ENCODE measurements at regions of chr2 and their contacts with region 1.

Region 1: GRCh38 chr2:120312861-120313694 is 32.9 kb upstream of the INHBB start:
- DNase-seq: peak; percentile 85
- ATAC-seq: peak; percentile 78
- H3K4me3 Mint-ChIP-seq: peak overlapping the region; percentile 68
- H3K27ac Mint-ChIP-seq: peak overlapping the region; percentile 68
- H3K4me1 Mint-ChIP-seq: peaks cover 51% of the 10 kb centered on the region
- H3K27me3 Mint-ChIP-seq: no peaks in the 10 kb centered on the region

Region 2: GRCh38 chr2:120206022-120206581 is 107.0 kb before region 1 on chr2:
- CTCF ChIA-PET with region 1: interaction called, 17 read pairs
- POLR2A ChIA-PET with region 1: no interaction called
- DNase-seq: peak; percentile 59
- ATAC-seq: peak; percentile 40
- H3K4me3 Mint-ChIP-seq: no peak overlapping the region
- H3K27ac Mint-ChIP-seq: no peak overlapping the region
- H3K4me1 Mint-ChIP-seq: peaks cover 11% of the 10 kb centered on the region
- H3K27me3 Mint-ChIP-seq: no peaks in the 10 kb centered on the region

Region 3: DNA sequence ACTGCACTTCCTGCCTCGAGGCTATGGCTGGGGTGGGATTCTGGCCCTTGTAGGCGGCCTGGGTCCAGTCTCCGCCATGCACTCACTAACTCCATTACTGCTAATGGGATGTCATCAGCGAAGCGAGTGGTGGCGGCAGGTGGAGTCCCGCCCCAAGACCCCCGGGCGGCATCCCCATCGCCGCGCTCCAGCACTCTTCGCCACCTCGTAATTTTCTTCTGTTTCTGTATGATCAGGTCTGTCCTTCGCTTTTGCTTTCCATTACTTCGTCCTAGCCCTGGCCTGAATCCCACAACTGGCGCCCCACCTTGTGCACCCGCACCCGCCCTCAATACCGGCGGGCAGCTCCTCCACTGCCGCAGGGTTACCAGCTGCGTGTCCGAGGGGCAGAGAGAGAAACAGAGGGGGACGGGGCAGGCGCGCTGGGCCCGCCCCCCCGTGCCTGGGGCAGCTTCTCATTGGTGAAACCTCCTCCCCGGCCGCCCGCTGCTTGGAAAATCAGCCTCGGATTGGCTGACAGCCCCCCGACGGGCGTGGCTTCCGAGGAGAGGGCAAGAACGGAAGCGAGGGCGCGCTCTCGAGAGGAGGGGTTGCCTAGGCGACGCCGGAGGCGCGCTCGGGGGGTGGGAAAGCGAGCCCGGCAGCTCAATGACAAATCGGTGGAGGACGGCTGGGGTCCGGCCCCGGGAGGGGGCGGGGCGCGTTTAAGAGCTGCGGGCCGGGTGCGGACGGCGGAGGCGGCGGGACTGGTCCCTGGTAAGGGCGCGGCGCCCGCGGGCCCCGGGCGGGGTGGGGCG is 60.7 kb before region 1 on chr2 and contains the start of gene RALB:
- CTCF ChIA-PET with region 1: interaction called, 26 read pairs
- POLR2A ChIA-PET with region 1: interaction called, 4 read pairs
- DNase-seq: peak; percentile 100
- ATAC-seq: peak; percentile 97
- H3K4me3 Mint-ChIP-seq: peak within 1 kb of the TSS; percentile 99
- H3K27ac Mint-ChIP-seq: peak within 1 kb of the TSS; percentile 92
- H3K4me1 Mint-ChIP-seq: peaks cover 66% of the 10 kb centered on the region
- H3K27me3 Mint-ChIP-seq: peaks cover 23% of the 10 kb centered on the region
- total RNA-seq, gene RALB: 39.4 to 45.4 TPM

Region 4: DNA sequence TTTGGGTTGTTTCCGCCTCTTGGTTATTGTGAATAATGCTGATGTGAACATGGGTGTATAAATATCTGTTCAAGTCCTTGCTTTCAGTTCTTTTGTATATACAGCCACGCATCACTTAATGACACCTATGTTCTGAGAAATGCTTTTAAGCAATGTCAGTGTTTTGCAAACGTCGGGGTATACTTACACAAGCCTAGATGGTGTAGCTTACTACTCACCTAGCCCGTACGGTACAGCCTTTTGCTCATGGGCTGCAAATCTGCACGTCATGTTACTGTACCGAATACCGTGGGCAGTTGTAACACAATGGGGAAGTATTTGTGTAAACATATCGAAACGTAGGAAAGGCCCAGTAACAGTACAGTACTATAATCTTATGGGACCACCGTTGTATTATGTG is 48.1 kb before region 1 on chr2:
- CTCF ChIA-PET with region 1: interaction called, 11 read pairs
- POLR2A ChIA-PET with region 1: no interaction called
- DNase-seq: no peak
- ATAC-seq: no peak
- H3K4me3 Mint-ChIP-seq: no peak overlapping the region
- H3K27ac Mint-ChIP-seq: no peak overlapping the region
- H3K4me1 Mint-ChIP-seq: peaks cover 12% of the 10 kb centered on the region
- H3K27me3 Mint-ChIP-seq: no peaks in the 10 kb centered on the region

Region 5: GRCh38 chr2:120294008-120294340 is 19.1 kb before region 1 on chr2:
- CTCF ChIA-PET with region 1: interaction called, 38 read pairs
- POLR2A ChIA-PET with region 1: no interaction called
- DNase-seq: no peak
- ATAC-seq: no peak
- H3K4me3 Mint-ChIP-seq: no peak overlapping the region
- H3K27ac Mint-ChIP-seq: no peak overlapping the region
- H3K4me1 Mint-ChIP-seq: peaks cover 37% of the 10 kb centered on the region
- H3K27me3 Mint-ChIP-seq: no peaks in the 10 kb centered on the region

Region 6: DNA sequence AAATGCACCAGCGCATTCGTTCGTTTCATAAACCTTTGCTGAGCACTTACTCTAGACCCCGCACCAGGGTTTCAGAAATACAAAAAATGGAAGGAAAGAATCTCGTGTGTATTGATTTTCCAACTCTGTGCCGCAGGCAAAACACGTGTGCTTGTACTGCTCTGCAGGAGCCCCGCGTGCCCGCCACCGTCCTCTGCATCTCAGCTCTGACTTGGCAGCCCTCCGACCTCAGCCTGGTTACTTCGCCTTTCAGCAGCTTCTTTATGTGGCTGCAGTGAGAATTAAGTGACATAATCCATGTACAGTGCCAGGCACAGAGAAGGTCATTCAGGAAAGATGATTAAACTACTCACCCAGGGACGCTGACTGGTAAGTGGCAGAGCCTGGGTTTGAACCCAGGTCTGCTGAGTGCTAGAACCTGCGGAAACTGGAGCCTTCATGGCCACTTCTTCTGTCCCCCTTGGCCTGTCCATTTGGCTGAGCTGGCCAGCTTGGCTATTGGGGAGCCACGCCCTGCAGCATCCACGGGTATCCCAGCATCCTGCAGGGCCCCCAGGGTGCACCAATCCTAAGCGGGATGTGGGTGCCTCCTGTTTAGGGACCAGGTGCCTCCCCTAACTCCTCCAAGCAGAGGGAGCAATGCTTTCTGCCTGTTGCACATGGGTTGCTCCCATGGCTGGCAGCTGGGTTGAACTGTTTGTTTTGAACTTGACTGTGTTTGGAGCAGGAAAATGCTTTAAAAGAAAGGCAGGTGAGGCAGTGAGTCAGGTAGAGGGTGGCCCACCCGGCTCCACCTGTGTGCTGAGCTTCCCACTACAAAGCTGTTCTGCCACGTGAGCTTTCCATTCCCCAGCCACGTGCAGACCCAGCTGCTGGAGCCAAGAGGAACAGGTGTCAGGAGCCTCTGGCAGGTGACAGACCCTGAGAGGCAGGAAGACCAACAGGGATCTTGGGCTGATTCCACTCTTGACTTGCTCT is 67.1 kb after region 1 on chr2:
- CTCF ChIA-PET with region 1: no interaction called
- POLR2A ChIA-PET with region 1: no interaction called
- DNase-seq: no peak
- ATAC-seq: no peak
- H3K4me3 Mint-ChIP-seq: no peak overlapping the region
- H3K27ac Mint-ChIP-seq: no peak overlapping the region
- H3K4me1 Mint-ChIP-seq: no peaks in the 10 kb centered on the region
- H3K27me3 Mint-ChIP-seq: no peaks in the 10 kb centered on the region

Measured in activated CD8-positive, alpha-beta T cell treated with anti-CD3 and anti-CD28 coated beads, Interleukin-2, amount 10 ng/mL, durations not matched to agents 7 days and 5 days (primary cell).